HEK293 (cell line): ENCODE measurements at regions of chr15 and their contacts with region 1.

Region 1: DNA sequence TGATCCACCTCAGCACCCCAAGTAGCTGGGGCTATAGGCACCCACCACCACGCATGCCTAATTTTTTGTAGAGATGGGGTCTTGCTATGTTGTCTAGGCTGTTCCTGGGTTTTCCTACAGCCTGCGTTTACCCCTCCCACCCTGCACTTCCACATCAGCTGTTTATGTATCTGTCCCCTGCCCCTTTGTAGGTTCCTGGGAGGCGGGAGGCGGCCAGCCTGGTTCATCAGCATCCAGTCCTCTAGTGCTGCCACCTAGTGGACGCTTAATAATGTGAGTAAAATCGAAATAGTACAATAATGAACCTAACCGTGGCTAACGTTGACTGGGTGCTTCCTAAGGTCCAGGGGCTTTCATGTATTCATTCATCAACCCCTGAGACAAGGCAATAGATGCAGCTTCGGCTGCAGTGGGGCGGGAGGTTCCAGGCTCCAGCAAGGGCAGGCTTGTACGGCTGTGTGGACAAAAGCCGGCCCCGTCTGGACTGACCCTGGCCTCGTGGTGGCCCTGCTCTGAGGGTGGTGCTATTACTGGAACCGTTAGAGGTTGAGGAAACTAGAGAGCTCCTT is 1.2 kb upstream of the LCTL start:
- H3K4me3 ChIP-seq: no peak overlapping the region
- H3K27ac ChIP-seq: no peak overlapping the region
- H3K4me1 ChIP-seq: no peaks in the 10 kb centered on the region
- CTCF ChIP-seq: peak; percentile 76; the same call in 1 of the 2 replicates

Region 2: GRCh38 chr15:66504563-66505429 is 62.3 kb before region 1 on chr15 and contains the starts of genes RPL4 and ZWILCH:
- CTCF ChIA-PET with region 1: interaction called, 10 read pairs
- POLR2A ChIA-PET with region 1: no interaction called
- H3K4me3 ChIP-seq: peak within 1 kb of the TSS; percentile 76
- H3K27ac ChIP-seq: peak within 1 kb of the TSS; percentile 86
- H3K4me1 ChIP-seq: peaks cover 5% of the 10 kb centered on the region; the same call in 1 of the 2 replicates
- CTCF ChIP-seq: peak; percentile 20; the same call in 1 of the 2 replicates

Region 3: GRCh38 chr15:66545249-66545648 is 21.8 kb before region 1 on chr15:
- CTCF ChIA-PET with region 1: interaction called, 11 read pairs
- POLR2A ChIA-PET with region 1: no interaction called
- H3K4me3 ChIP-seq: no peak overlapping the region
- H3K27ac ChIP-seq: no peak overlapping the region
- H3K4me1 ChIP-seq: no peaks in the 10 kb centered on the region
- CTCF ChIP-seq: no peak

Region 4: GRCh38 chr15:66555685-66556084 is 11.4 kb before region 1 on chr15:
- CTCF ChIA-PET with region 1: interaction called, 20 read pairs
- POLR2A ChIA-PET with region 1: no interaction called
- H3K4me3 ChIP-seq: no peak overlapping the region
- H3K27ac ChIP-seq: no peak overlapping the region
- H3K4me1 ChIP-seq: no peaks in the 10 kb centered on the region
- CTCF ChIP-seq: no peak

Region 5: GRCh38 chr15:66578286-66578875 is 11.3 kb after region 1 on chr15:
- CTCF ChIA-PET with region 1: interaction called, 12 read pairs
- POLR2A ChIA-PET with region 1: no interaction called
- H3K4me3 ChIP-seq: no peak overlapping the region
- H3K27ac ChIP-seq: no peak overlapping the region
- H3K4me1 ChIP-seq: no peaks in the 10 kb centered on the region
- CTCF ChIP-seq: no peak

Region 6: DNA sequence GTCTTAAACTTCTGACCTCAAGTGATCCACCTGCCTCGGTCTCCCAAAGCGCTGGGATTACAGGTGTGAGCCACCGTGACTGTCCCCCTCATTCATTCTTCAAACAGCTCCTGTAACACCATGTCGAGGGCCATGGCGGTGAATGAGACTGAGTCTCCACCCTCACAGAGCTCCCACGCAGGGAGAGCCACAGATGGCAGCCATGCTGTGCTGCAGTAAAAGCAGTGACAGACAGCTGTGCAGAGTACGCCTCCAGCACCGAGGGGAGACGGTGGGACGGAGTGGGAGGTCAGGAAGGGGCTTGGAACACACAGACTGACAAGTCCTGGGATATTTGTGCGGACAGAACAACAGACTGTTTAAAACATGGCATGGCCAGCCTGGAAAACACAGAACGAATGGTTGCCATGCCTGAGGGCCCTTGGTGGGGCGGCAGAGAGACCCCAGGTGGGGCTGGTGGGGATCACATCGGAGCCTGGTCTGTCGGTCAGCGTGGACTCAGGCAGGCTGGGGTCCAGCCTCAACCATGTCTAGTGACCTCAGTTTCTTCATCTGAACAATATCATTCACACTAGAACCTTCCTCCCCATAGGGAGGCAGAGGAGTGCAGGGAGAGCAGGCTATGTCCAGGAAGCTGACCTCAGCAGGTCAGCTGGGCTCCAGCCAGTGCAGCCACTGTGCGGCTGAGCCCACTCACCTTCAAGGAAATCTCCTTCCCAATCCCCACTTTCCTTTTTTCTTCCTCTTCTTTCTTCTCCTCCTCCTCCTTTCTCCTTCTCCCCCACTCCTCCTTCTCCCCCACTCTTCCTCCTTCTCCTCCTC is 19.3 kb after region 1 on chr15:
- CTCF ChIA-PET with region 1: interaction called, 15 read pairs
- POLR2A ChIA-PET with region 1: no interaction called
- H3K4me3 ChIP-seq: no peak overlapping the region
- H3K27ac ChIP-seq: no peak overlapping the region
- H3K4me1 ChIP-seq: no peaks in the 10 kb centered on the region
- CTCF ChIP-seq: no peak